Activated T-helper 1 cell treated with anti-CD3 and anti-CD28 coated beads, Interleukin-12 subunit alpha, Interleukin-12 subunit beta, Interleukin-2, Interleukin-4 antibody, amounts not matched to agents 30 ng/mL and 10 ng/mL and 1 ng/mL, durations not matched to agents 14 hours and 24 hours and 36 hours (primary cell): ENCODE measurements at regions of chr2 and their contacts with region 1.

Region 1: GRCh38 chr2:27356382-27357181 is at the start of gene GTF3C2:
- DNase-seq: peak; percentile 89
- H3K4me3 Mint-ChIP-seq: peak within 1 kb of the TSS; percentile 98
- H3K27ac Mint-ChIP-seq: peak within 1 kb of the TSS; percentile 99
- H3K4me1 Mint-ChIP-seq: peaks cover 47% of the 10 kb centered on the region
- H3K27me3 Mint-ChIP-seq: no peaks in the 10 kb centered on the region
- total RNA-seq, gene GTF3C2: 86.3 and 86.6 TPM in 2 replicates

Region 2: DNA sequence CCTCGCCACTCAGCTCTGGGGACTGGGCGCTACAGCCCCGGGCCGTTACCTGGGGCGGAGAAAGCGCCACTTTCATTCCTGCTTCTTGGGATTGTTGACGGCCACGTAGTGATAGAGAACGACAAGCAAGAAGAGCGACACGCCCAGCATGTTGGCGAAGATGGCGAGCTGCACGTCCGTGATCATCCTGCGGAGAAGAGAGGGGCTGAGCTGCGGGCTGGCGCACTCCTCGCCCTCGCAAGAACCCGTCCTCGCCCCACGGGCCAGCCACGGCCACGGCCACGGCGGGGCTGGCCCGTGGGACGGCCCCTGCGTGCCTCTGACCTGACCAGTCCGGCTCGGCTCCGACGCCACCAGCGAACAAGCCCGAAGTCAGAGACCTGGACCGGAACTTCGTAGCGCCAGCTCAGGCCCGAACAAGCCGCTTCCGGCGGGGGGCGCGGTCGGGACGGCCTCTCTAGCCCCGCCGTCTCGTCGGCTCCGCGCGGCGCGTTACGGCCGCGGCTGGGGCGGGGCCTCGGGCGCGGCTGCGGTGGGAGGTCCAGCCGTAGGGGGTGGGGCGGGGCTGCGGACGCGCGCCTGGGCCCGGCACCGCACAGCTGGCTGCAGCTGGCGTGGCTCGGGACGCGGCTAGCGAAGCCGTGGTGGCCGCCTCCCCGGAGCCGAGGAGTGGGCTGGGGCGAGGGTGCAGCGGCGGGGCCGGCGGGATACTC is 285.1 kb before region 1 on chr2 and contains the start of gene OST4:
- intact Hi-C with region 1: loop called (anchors 1 kb)
- DNase-seq: peak; percentile 91
- H3K4me3 Mint-ChIP-seq: peak within 1 kb of the TSS; percentile 99
- H3K27ac Mint-ChIP-seq: peak within 1 kb of the TSS; percentile 98
- H3K4me1 Mint-ChIP-seq: peaks cover 84% of the 10 kb centered on the region
- H3K27me3 Mint-ChIP-seq: peaks cover 2% of the 10 kb centered on the region
- total RNA-seq, gene OST4: 322 and 332 TPM in 2 replicates

Region 3: DNA sequence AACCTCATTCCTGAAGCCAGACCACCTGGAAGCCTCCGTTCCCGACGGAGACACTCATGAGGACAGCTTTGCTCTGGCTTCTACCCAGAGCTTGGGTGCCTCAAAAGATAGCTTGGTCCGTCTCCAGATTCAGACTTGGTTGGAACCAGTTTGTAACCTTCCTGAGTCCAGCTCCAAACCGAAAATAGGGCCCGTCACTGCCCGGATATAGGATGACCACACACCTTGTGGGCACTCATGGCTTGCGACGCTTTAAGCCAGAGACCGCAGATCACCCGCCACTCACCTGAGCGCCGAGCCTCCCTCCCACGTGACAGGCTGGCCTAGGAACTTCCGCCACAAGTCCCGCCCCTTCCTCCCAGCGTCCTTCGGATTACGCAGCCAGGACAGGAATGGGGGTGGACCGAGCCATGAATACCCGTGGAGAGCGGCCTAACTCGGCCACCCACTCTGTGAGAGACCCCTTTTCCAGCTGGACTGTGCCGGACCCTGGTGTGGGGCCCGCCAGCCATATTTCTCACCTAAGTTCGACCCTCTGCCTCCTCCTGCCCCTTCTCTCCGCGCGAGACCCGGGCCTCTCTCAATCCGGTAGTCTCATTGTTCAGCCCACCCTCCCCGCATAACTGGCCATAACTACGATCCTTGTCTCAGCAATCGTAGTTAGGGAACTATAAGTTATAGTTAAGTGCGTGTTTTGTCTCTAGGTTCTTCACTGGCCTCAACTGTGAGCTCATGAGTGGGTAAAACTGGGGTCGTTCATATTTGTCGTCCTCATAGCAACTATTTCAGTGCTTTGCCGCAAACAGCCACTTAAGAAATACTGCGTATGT is 33.6 kb before region 1 on chr2 and contains the start of gene MPV17:
- intact Hi-C with region 1: loop called (anchors 1 kb)
- DNase-seq: peak; percentile 84
- H3K4me3 Mint-ChIP-seq: peak within 1 kb of the TSS; percentile 99
- H3K27ac Mint-ChIP-seq: peak within 1 kb of the TSS; percentile 88
- H3K4me1 Mint-ChIP-seq: peaks cover 32% of the 10 kb centered on the region
- H3K27me3 Mint-ChIP-seq: no peaks in the 10 kb centered on the region
- total RNA-seq, gene MPV17: 85.9 and 89.9 TPM in 2 replicates

Region 4: DNA sequence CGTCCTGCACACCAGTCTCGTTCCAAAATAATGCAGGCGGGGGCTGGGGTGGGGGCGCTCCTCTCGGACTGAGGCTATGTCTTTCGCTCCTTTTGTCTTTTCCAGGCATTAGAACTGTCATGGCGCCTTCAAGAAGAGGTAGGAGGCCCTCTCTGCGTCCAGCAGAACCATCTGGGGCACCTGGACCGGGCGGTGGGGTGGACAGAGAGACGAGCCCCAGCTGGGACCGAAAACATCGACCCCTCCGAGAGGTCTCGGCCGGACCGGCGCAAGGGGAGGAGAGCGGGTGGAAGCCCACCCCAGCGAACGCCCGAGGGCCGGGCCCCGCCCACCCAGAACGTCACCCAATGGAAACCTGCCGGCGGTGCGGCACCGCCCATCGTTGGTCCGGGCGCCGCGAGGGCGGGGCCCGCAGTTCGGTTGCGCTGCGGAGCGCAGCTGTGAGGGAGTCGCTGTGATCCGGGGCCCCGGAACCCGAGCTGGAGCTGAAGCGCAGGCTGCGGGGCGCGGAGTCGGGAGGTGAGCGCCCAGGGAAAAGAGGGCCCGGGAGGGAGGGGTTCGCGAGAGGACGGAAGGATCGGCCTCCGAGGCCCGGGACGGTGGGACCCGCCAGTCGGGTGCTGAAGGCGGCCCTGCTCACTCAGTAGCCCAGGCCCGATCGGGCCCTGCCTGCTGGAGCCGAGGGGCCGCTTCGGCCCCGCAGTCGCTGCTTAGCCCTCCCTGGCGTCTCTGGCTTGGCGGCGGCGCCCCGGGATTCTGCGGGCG is 71.8 kb after region 1 on chr2 and contains the start of gene NRBP1:
- intact Hi-C with region 1: loop called (anchors 1 kb)
- DNase-seq: peak; percentile 93
- H3K4me3 Mint-ChIP-seq: peak within 1 kb of the TSS; percentile 97
- H3K27ac Mint-ChIP-seq: peak within 1 kb of the TSS; percentile 97
- H3K4me1 Mint-ChIP-seq: peaks cover 37% of the 10 kb centered on the region
- H3K27me3 Mint-ChIP-seq: no peaks in the 10 kb centered on the region
- total RNA-seq, gene NRBP1: 99.7 and 106 TPM in 2 replicates

Region 5: DNA sequence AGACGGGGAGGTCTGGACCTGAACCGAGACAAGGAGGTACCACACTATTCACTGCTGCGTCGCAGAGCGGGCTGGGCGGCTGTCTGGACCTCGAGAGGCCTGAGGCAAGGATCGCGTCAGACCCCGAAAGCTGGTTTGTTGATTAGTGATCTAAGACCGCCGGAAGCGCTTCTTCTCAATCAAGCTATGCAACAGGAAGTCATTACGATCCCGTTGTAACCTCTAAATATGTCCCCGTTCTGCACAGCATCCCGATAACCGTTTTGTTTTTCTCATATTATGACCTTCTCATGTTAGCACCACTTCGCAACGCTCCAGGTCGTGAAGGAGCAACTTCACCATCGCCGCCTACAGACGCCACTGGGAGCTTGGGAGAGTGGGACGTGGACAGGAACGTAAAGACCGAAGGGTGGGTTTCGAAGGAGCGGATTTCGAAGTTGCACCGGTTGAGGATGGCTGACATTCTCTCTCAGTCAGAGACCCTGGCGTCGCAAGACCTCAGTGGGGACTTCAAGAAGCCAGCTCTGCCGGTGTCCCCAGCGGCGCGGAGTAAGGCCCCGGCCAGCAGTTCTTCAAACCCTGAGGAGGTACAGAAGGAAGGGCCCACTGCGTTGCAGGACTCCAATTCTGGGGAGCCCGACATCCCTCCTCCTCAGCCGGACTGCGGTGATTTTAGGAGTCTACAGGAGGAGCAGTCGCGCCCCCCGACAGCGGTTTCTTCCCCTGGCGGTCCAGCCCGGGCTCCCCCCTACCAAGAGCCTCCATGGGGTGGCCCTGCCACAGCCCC is 307.1 kb after region 1 on chr2 and contains the starts of genes SLC4A1AP and SUPT7L:
- intact Hi-C with region 1: loop called (anchors 2 kb)
- DNase-seq: peak; percentile 70
- H3K4me3 Mint-ChIP-seq: peak within 1 kb of the TSS; percentile 96
- H3K27ac Mint-ChIP-seq: peak within 1 kb of the TSS; percentile 97
- H3K4me1 Mint-ChIP-seq: peaks cover 55% of the 10 kb centered on the region
- H3K27me3 Mint-ChIP-seq: no peaks in the 10 kb centered on the region
- total RNA-seq, gene SLC4A1AP: 29.7 and 29.8 TPM in 2 replicates
- total RNA-seq, gene SUPT7L: 32.5 and 35.2 TPM in 2 replicates

Region 6: GRCh38 chr2:28649481-28650214 is 1293.1 kb after region 1 on chr2:
- intact Hi-C with region 1: no loop called
- DNase-seq: no peak
- H3K4me3 Mint-ChIP-seq: no peak overlapping the region
- H3K27ac Mint-ChIP-seq: peak overlapping the region; percentile 84
- H3K4me1 Mint-ChIP-seq: peaks cover 48% of the 10 kb centered on the region
- H3K27me3 Mint-ChIP-seq: no peaks in the 10 kb centered on the region

Region 7: DNA sequence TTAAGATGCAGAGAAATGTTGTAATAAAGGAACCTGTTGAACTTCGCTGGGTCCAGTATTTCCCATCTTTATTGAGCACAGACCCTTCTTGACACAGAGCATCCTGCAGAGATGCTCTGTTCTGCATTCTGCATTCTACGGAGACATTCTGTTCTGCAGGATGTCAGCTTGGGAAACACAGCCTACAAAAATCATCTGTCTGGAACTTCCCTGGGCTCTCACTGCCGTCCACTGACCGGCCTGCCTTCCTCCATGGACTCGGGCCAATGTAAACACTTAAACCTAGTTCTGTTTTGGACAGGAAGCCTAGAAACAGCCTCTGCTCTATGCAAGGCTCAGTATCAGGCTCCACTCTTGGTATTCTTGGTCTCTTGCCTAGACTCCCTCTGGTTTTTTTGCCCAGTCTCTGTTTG is 1305.0 kb after region 1 on chr2:
- intact Hi-C with region 1: no loop called
- DNase-seq: no peak
- H3K4me3 Mint-ChIP-seq: no peak overlapping the region
- H3K27ac Mint-ChIP-seq: no peak overlapping the region
- H3K4me1 Mint-ChIP-seq: peaks cover 31% of the 10 kb centered on the region
- H3K27me3 Mint-ChIP-seq: peaks cover 7% of the 10 kb centered on the region